Activated naive CD4-positive, alpha-beta T cell treated with anti-CD3 and anti-CD28 coated beads, Interleukin-2, amount 10 ng/mL, durations not matched to agents 7 days and 5 days (primary cell): ENCODE measurements at regions of chrX and their contacts with region 1.

Region 1: GRCh38 chrX:53317365-53318069 is 36.1 kb upstream of the IQSEC2 start:
- DNase-seq: peak; percentile 74
- H3K4me3 Mint-ChIP-seq: no peak overlapping the region
- H3K27ac Mint-ChIP-seq: no peak overlapping the region
- H3K4me1 Mint-ChIP-seq: peaks cover 13% of the 10 kb centered on the region
- H3K27me3 Mint-ChIP-seq: peaks cover 55% of the 10 kb centered on the region

Region 2: DNA sequence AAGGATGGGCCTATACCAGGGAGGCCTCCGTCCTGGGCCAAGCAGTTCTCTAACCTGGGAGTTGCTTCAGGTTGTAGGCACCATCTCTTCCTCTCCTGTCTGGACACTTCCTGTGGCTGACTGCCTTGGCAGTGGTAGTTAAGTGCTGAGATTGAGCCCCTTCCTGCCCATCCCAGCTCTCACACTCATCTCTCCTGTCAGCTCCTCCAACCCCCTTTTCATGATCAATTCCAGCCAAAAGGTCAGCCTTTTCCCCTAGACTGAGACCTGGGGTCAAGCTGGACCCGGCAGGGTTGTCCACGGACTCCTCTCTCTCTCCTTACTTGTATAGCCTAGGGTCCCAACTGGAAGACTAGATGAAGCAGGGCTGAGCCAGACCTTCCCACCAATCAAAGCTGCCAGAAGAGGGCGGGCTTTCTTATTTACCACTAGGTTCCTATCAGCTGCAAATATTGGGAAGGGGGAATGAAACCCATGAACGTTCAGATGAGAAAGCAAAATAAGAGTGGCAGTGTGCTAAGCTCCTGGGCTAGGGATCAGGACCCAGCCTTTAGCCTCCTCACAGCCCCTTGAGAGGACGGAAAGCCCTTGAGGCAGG is 127.1 kb before region 1 on chrX:
- CTCF ChIA-PET with region 1: no interaction called
- DNase-seq: no peak
- H3K4me3 Mint-ChIP-seq: no peak overlapping the region
- H3K27ac Mint-ChIP-seq: no peak overlapping the region
- H3K4me1 Mint-ChIP-seq: no peaks in the 10 kb centered on the region
- H3K27me3 Mint-ChIP-seq: no peaks in the 10 kb centered on the region

Region 3: GRCh38 chrX:53284684-53285447 is 32.7 kb before region 1 on chrX:
- CTCF ChIA-PET with region 1: interaction called, 17 read pairs
- DNase-seq: peak; percentile 61
- H3K4me3 Mint-ChIP-seq: no peak overlapping the region
- H3K27ac Mint-ChIP-seq: no peak overlapping the region
- H3K4me1 Mint-ChIP-seq: peaks cover 41% of the 10 kb centered on the region
- H3K27me3 Mint-ChIP-seq: peaks cover 19% of the 10 kb centered on the region

Region 4: DNA sequence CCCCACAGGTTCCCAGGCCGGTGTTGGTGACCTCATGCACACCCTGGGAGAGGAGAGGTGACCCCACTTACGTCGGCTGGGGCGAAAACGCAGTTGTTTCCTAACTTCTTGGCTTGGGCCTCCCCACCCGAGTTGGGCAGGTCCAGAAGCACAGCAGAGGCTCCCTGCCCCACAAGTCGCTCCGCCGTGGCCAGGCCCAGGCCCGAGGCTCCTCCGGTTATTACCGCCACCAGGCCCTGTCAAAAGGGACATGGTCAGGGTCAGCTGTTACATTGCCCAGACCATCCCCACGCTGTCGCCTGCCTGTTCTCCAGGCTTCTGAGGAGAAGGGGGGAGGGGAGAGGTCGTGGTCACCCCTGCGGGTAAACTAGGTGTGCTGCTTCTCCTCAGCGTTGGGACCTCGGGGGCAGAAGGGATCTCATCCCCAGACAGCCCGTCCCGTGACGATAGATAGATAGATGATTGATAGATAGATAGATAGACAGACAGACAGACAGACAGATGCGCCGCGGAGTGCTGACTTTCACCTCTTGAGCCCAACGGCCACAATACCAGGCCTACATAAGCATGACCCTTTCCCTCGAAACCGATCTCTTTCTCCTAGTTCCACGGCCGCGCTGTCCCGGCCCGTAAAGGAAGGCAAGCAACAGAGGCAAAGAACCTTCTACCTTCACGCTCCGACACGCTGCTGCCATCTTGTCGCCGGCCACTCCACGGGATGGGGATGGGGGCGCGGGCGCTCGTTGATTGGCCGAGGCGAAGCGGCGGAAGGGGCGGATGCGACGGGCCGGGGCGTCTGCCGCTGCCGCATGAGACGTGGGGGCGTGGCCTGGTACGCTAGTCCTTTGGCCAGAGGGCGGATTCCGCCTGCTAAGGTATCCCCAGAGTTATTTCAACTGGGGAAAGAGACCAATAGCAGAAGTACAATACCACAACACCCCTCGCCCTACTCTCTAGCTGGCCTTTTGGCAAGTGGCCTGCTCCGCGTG is 116.4 kb after region 1 on chrX and contains the start of gene HSD17B10:
- CTCF ChIA-PET with region 1: interaction called, 41 read pairs
- DNase-seq: peak; percentile 91
- H3K4me3 Mint-ChIP-seq: peak within 1 kb of the TSS; percentile 89
- H3K27ac Mint-ChIP-seq: peak within 1 kb of the TSS; percentile 80
- H3K4me1 Mint-ChIP-seq: peaks cover 35% of the 10 kb centered on the region
- H3K27me3 Mint-ChIP-seq: no peaks in the 10 kb centered on the region

Region 5: DNA sequence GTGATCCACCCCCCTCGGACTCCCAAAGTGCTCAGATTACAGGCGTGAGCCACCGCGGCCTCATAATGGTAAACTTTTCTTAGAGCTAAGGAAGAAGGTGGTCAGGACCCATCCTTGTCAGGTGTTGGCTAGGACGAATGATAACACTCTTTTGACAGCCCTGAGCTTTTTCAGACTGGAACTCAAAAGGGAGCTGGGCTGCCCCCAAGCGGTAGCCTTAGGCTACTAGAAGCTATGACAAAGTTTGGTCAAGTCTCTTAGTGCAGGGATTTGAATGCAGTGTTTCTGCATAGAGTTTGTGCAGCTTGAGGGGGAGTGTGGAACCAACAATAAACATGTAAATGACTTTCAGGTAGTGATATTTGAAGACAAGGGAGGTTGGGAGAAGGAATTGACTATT is 128.5 kb after region 1 on chrX:
- CTCF ChIA-PET with region 1: interaction called, 73 read pairs
- DNase-seq: peak; percentile 69
- H3K4me3 Mint-ChIP-seq: no peak overlapping the region
- H3K27ac Mint-ChIP-seq: no peak overlapping the region
- H3K4me1 Mint-ChIP-seq: peaks cover 11% of the 10 kb centered on the region
- H3K27me3 Mint-ChIP-seq: no peaks in the 10 kb centered on the region

Region 6: DNA sequence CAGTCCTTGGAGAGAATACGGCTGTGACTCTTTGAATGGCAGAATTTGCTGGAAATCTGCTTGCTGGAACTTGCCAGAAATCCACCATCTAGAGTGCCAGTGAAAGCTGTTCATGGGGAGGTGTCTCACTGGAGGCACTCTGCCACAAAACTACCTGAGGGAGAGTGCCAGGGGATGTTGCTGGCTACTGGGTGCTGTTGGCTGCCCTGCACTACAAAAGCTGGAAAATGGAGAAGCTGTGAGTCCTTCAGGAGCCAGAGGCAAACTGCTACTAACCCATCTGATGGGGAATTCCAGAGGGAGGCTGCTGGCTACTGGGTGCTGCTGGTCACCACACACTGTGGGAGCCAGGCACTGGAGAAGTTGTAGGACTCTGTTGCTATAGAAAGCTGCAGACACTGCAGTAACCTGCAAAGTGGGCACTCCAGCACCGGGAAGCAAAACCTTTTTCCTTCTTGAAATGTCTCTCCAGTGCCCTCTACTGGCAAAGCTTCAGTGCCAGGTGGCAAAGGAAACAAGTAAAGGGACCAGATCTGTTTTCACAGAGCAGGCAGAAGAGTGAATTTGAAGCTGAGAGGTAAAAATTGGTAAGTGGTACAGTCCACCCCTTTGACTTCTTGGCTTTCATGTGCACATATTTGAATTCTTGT is 164.4 kb after region 1 on chrX:
- CTCF ChIA-PET with region 1: interaction called, 48 read pairs
- DNase-seq: peak; percentile 61
- H3K4me3 Mint-ChIP-seq: no peak overlapping the region
- H3K27ac Mint-ChIP-seq: no peak overlapping the region
- H3K4me1 Mint-ChIP-seq: no peaks in the 10 kb centered on the region
- H3K27me3 Mint-ChIP-seq: no peaks in the 10 kb centered on the region